Transverse colon (tissue), 4 donors: ENCODE measurements at regions of chr4 and their contacts with region 1.

Region 1: GRCh38 chr4:3442959-3443749 is 1.4 kb downstream of the HGFAC start:
- DNase-seq: peak; percentile 47
- H3K4me3 ChIP-seq: no peak overlapping the region
- H3K27ac ChIP-seq: no peak overlapping the region
- H3K4me1 ChIP-seq: no peaks in the 10 kb centered on the region
- H3K27me3 ChIP-seq: no peaks in the 10 kb centered on the region
- CTCF ChIP-seq: peak; percentile 93 to 99 (median 98)
- EP300 ChIP-seq: no peak
- POLR2A ChIP-seq: no peak

Region 2: GRCh38 chr4:2923141-2923551 is 520.0 kb before region 1 on chr4:
- in situ Hi-C with region 1: no loop called
- intact Hi-C with region 1: no loop called
- DNase-seq: no peak
- H3K4me3 ChIP-seq: no peak overlapping the region
- H3K27ac ChIP-seq: peak overlapping the region in 2 of 4 donors; percentile 30 to 34
- H3K4me1 ChIP-seq: peaks cover 4 to 12% (median 8%) of the 10 kb centered on the region in 4 donors
- H3K27me3 ChIP-seq: no peaks in the 10 kb centered on the region
- CTCF ChIP-seq: no peak
- EP300 ChIP-seq: no peak
- POLR2A ChIP-seq: no peak

Region 3: GRCh38 chr4:3106339-3107186 is 336.6 kb before region 1 on chr4:
- in situ Hi-C with region 1: no loop called
- intact Hi-C with region 1: loop called (anchors 5 kb)
- DNase-seq: peak; percentile 87
- H3K4me3 ChIP-seq: no peak overlapping the region
- H3K27ac ChIP-seq: peak overlapping the region; percentile 31 to 55 (median 49)
- H3K4me1 ChIP-seq: peaks cover 0 to 13% (median 0%) of the 10 kb centered on the region in 4 donors
- H3K27me3 ChIP-seq: no peaks in the 10 kb centered on the region
- CTCF ChIP-seq: peak; percentile 88 to 94 (median 91)
- EP300 ChIP-seq: no peak
- POLR2A ChIP-seq: no peak

Region 4: DNA sequence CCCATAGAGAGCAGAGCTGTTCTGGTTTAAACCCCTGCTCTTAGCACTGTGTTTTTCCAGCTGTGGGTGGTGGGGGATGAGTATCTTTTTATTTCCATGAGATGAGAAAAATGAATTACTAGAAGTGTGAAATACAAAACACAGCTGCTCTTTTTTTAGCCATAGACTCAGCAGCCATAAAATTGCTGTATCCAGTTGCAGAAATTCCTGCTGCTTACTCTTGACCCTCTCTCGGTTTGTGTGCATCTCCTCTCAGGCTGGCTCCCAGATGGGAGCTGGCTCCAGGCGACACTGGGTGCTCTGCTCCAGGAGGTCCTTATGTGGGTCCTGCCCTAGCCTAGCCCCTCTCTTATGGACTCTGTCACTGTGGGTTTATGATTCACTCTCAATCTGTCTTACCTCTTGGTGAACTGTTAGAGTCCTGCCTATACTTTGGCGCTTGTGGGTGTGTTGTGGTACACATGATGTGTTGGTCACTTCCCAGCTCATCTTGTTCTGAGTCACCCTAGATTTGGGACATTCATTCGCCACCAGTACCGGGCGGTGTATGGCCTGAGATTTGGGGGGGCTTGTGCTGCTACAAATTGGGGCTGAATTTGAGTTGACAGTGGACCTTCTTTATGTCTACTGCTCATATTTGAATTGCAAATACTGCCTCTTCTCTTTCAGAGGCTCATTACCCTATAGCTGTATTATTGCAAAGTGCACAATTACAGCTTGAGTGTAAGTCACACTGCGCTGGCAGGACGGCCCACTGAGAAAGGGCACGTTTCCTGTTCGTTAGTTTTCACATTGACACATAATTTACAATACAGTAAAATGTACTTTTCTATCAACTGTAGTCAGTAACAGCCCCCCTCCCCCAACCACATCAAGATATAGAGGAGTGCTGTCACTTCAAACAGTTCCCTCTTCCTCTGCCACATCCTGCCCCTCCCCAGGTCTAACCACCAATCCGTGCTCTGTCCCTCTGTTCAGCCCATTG is 241.1 kb before region 1 on chr4:
- in situ Hi-C with region 1: loop called in 1 of 4 experiments (anchors 25 kb)
- intact Hi-C with region 1: no loop called
- DNase-seq: peak; percentile 18
- H3K4me3 ChIP-seq: no peak overlapping the region
- H3K27ac ChIP-seq: peak overlapping the region; percentile 4 to 69 (median 56)
- H3K4me1 ChIP-seq: peaks cover 6 to 26% (median 11%) of the 10 kb centered on the region in 4 donors
- H3K27me3 ChIP-seq: no peaks in the 10 kb centered on the region
- CTCF ChIP-seq: no peak
- EP300 ChIP-seq: no peak
- POLR2A ChIP-seq: no peak

Region 5: DNA sequence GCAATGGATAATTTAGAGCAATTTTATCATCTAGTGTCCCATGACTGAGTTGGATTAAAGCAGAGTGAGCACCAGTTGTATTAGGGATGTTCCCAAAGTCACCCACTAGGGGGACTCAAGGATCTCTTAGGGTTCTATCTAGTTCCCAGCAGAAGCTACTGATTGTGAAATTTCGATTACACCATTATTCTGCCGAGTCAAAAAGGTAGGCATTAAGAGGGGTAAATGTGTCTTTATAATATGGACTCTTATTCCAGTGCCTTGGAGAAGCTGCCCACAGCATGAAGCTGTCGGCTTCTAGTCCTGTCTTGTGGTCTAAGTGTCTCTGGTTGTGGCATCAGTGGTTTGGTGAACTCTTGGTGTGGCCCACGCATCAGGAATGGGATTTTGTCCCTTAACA is 97.0 kb before region 1 on chr4:
- in situ Hi-C with region 1: loop called in 2 of 4 experiments (anchors 5 to 10 kb)
- intact Hi-C with region 1: loop called (anchors 2 kb)
- DNase-seq: peak; percentile 34
- H3K4me3 ChIP-seq: no peak overlapping the region
- H3K27ac ChIP-seq: no peak overlapping the region
- H3K4me1 ChIP-seq: peaks cover 0 to 12% (median 0%) of the 10 kb centered on the region in 4 donors
- H3K27me3 ChIP-seq: no peaks in the 10 kb centered on the region
- CTCF ChIP-seq: peak; percentile 77 to 85 (median 85)
- EP300 ChIP-seq: no peak
- POLR2A ChIP-seq: no peak

Region 6: GRCh38 chr4:3369781-3370674 is 73.1 kb before region 1 on chr4:
- in situ Hi-C with region 1: no loop called
- intact Hi-C with region 1: no loop called
- DNase-seq: no peak
- H3K4me3 ChIP-seq: peak overlapping the region in 1 of 4 donors; percentile 6
- H3K27ac ChIP-seq: peak overlapping the region in 2 of 4 donors; percentile 5 to 39
- H3K4me1 ChIP-seq: peaks cover 9 to 20% (median 14%) of the 10 kb centered on the region in 4 donors
- H3K27me3 ChIP-seq: no peaks in the 10 kb centered on the region
- CTCF ChIP-seq: no peak
- EP300 ChIP-seq: no peak
- POLR2A ChIP-seq: no peak

Region 7: DNA sequence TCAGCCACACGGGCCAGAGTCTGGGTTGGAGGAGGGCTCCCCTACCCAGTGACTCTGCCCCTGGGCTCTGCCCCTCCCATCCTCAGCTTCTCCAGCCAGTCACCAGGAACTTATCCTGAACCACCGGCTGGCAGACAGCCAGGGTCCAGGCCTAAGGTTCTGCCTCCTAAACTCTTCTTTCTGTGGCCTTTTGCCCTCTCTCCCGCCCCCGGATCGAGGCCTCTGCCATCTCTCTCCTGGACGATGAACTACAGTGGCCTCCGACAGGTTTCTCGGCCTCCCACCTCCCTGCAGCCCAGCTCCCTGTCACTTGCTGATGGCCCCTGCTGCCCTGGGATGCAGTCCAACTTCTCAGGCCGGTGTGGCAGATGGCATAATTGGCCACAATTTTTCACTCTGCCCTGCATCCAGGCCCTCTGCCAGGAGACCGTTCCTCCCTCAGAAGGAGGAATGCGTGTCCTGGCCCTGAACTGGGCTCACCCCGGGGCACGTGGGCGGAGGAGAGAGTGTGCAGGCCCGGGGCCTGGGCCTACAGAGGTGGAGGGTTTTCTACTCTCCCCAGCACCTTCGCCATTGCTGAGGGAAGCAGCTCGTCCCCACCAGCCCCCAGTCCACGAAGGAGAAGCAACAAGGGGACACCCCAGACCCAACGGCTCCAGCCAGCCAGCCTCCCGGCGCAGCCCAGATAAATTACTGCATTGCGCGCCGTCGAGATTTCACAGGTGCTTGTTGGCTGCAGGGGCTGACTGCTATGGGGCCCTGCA is 171.0 kb after region 1 on chr4:
- in situ Hi-C with region 1: no loop called
- intact Hi-C with region 1: no loop called
- DNase-seq: no peak
- H3K4me3 ChIP-seq: no peak overlapping the region
- H3K27ac ChIP-seq: no peak overlapping the region
- H3K4me1 ChIP-seq: peaks cover 0 to 4% (median 0%) of the 10 kb centered on the region in 4 donors
- H3K27me3 ChIP-seq: no peaks in the 10 kb centered on the region
- CTCF ChIP-seq: no peak
- EP300 ChIP-seq: no peak
- POLR2A ChIP-seq: no peak

Region 8: GRCh38 chr4:3677748-3678070 is 234.6 kb after region 1 on chr4:
- in situ Hi-C with region 1: no loop called
- intact Hi-C with region 1: no loop called
- DNase-seq: no peak
- H3K4me3 ChIP-seq: no peak overlapping the region
- H3K27ac ChIP-seq: no peak overlapping the region
- H3K4me1 ChIP-seq: no peaks in the 10 kb centered on the region
- H3K27me3 ChIP-seq: peaks cover 25% of the 10 kb centered on the region
- CTCF ChIP-seq: no peak
- EP300 ChIP-seq: no peak
- POLR2A ChIP-seq: no peak